ENCODE measurements at regions of chr20 and their contacts with region 1.

Region 1: GRCh38 chr20:362271-363254 is 15.7 kb downstream of the NRSN2 start:
- H3K4me3 ChIP-seq: no peak overlapping the region
- H3K27ac ChIP-seq: peak overlapping the region; percentile 16; the same call in 1 of the 2 replicates
- H3K4me1 ChIP-seq: no peaks in the 10 kb centered on the region; the same call in 1 of the 2 replicates
- CTCF ChIP-seq: peak; percentile 92

Region 2: GRCh38 chr20:347640-348484 is 14.7 kb before region 1 on chr20:
- CTCF ChIA-PET with region 1: interaction called, 19 read pairs
- POLR2A ChIA-PET with region 1: interaction called, 23 read pairs
- H3K4me3 ChIP-seq: peak overlapping the region; percentile 50
- H3K27ac ChIP-seq: peak overlapping the region; percentile 90
- H3K4me1 ChIP-seq: peaks cover 10% of the 10 kb centered on the region
- CTCF ChIP-seq: peak; percentile 18; the same call in 1 of the 2 replicates

Region 3: DNA sequence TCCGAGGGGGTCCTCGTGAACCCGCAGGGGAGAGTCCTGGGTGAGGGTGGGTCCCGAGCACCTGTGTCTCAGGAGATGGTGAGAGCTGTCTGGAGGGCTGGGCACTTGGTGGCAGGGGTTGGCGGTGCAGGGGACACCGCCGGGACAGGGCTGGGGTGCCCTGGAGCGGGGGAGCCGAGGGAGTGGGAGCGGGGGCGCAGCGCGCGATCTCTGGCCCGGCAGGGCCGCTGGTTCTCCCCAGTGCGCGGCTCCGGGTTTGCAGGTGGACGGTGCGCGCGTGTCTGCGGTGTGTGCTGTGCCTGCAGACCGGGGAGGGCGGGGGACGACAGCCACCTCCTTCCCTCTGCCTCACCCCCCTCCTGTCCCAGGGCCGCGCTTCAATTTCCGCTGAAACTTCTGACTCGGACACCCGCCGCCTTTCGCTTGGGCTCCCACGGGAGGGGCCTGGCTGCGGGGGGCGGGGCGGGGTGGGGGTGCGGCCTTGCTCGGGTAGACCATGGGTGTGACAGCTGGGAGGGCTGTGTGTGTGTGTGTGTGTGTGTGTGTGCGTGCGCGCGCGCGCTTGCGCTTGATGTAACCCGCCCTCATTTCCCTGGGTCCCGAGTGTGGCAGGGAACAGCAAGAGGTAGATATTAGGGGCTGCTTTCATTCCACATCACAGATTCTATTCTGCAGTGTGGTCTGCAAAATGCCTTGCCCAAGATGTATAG is 19.2 kb after region 1 on chr20:
- CTCF ChIA-PET with region 1: interaction called, 8 read pairs
- POLR2A ChIA-PET with region 1: interaction called, 19 read pairs
- H3K4me3 ChIP-seq: peak overlapping the region; percentile 60
- H3K27ac ChIP-seq: peak overlapping the region; percentile 87; the same call in 1 of the 2 replicates
- H3K4me1 ChIP-seq: peaks cover 9% of the 10 kb centered on the region; the same call in 1 of the 2 replicates
- CTCF ChIP-seq: peak; percentile 43

Region 4: DNA sequence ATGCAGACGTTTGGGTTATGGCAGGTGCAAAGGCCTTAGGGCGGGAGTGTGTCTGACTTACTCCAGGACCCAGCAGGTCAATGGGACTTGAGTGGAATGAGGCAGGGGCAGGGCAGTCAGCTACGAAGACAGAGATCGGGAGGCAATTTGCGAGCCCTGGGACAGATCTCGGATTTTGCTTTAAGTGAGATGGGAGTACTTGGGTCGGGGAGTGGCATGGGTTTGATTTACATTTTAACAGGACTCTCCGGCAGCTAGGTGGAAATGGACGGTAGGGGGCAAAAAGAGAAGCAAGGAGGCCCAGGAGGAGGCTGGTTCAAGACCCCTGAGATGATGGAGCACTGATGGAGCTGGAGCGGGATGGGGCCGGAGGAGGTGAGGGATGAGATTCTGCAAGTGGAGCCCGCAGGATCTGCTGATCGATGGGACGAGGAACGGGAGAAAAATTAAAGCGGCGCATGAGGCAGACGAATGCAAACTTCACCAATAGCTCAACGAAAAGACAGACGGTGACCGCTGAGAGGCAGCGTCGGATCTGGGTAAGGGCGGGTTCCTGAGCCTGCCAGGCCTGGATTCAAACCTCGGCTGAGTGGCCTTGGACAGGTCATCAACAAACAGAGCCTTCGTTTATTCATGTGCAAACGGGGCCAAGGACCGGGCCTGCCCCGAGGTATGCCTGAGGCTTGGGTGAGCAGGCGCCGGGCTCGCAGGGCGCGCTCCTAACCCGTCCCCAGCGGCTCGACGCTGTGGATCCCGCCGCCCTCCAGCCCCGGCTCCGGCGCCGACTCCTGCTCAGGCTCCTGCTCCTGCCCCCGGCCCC is 44.8 kb after region 1 on chr20:
- CTCF ChIA-PET with region 1: interaction called, 3 read pairs
- POLR2A ChIA-PET with region 1: interaction called, 14 read pairs
- H3K4me3 ChIP-seq: peak overlapping the region; percentile 34
- H3K27ac ChIP-seq: peak overlapping the region; percentile 76
- H3K4me1 ChIP-seq: peaks cover 6% of the 10 kb centered on the region
- CTCF ChIP-seq: peak; percentile 93

Region 5: DNA sequence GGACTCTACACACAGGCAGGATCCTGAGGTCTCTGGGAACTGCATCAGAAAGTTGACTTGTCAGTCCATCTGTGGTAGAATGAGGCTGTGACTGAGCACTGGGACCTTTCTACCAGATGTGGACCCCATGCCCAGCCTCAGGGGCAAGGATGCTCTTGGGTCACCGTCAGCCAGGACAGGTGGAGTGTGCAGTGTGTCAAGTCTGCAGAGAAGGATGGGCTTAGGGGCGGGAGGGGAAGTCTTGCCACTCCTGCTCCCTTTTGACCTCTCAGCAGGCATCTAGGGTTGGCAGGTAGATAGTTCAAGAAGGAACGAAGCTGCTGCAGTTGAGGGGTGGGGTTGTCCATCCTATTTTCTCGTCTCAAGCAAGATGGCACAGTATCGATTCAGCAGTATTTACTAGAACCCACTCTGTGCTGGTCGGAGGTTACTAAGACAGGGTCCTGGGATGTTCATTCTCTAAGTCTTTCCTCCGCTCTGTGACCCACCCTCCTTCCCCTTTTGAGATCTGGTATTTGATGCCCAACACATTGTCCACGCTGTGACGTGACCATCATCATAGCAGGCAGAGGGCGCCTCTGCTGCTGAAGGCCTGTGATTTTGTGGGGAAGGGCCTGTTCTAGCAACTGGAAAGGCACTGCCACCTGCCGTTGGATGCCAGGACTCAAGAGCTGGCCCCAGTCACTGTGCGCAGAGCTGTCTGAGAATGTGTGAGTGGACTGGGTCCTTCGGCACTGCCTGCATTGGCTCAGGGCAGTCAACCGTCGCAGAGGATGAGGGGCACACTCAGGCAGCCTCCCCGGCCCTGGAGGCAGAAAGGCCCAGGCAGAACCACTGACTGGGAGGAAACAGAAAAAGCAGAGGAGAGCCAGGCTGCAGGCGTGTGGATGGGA is 68.7 kb after region 1 on chr20:
- CTCF ChIA-PET with region 1: interaction called, 48 read pairs
- POLR2A ChIA-PET with region 1: interaction called, 4 read pairs
- H3K4me3 ChIP-seq: no peak overlapping the region
- H3K27ac ChIP-seq: peak overlapping the region; percentile 41; the same call in 1 of the 2 replicates
- H3K4me1 ChIP-seq: no peaks in the 10 kb centered on the region; the same call in 1 of the 2 replicates
- CTCF ChIP-seq: peak; percentile 98

Region 6: DNA sequence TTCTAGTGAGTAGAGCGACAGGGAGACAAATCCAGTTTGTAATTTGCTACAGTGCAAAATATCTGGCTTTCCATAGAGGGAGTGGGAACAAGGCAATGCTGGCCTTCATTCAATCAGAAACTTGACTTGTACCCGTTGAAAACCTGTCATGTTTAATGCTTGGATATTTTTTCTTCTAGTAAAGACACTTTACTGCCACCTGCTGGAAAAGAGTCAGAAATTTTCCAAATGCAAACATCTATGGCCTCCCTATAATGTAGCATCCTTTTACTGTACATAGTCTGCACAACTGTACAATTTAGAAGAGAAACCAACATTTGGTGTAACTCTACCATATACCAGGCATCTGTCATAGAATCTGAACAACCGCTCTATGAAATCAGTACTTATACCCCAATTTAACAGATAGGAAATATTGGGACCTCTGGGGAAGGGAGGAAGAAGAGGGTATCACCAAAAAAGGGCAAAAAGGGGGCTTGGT is 116.4 kb after region 1 on chr20:
- CTCF ChIA-PET with region 1: interaction called, 10 read pairs
- POLR2A ChIA-PET with region 1: no interaction called
- H3K4me3 ChIP-seq: no peak overlapping the region
- H3K27ac ChIP-seq: no peak overlapping the region
- H3K4me1 ChIP-seq: no peaks in the 10 kb centered on the region
- CTCF ChIP-seq: no peak

Measured in HEK293 (cell line).